ENCODE measurements at regions of chr17 and their contacts with region 1.

Region 1: DNA sequence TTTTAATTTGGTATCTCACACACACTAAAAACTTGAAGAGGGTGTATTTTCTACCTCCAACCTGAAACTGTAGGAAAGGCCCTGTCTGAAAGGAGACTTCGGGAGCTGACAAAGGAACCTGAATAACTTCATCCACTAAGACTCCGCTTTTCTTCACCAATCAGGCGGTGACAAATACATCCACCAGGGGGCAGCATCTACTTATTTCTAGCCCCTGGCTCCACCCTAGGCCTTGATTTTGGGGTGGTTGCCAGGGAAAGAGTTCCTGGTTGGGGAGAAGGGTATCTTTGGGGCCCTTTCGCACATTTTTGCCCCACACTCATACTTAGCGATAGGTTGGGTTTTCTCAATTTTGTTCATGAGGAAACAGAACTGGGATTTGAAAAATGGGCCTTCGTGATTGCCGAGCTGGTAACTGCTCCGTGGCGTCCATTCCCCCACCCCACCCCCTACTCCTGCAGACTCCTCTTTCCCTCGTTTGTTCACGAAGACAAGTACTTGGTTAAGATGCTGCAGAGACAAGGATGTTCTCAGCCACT is 4.8 kb upstream of the ARL4D start:
- DNase-seq: peak; percentile 79

Region 2: DNA sequence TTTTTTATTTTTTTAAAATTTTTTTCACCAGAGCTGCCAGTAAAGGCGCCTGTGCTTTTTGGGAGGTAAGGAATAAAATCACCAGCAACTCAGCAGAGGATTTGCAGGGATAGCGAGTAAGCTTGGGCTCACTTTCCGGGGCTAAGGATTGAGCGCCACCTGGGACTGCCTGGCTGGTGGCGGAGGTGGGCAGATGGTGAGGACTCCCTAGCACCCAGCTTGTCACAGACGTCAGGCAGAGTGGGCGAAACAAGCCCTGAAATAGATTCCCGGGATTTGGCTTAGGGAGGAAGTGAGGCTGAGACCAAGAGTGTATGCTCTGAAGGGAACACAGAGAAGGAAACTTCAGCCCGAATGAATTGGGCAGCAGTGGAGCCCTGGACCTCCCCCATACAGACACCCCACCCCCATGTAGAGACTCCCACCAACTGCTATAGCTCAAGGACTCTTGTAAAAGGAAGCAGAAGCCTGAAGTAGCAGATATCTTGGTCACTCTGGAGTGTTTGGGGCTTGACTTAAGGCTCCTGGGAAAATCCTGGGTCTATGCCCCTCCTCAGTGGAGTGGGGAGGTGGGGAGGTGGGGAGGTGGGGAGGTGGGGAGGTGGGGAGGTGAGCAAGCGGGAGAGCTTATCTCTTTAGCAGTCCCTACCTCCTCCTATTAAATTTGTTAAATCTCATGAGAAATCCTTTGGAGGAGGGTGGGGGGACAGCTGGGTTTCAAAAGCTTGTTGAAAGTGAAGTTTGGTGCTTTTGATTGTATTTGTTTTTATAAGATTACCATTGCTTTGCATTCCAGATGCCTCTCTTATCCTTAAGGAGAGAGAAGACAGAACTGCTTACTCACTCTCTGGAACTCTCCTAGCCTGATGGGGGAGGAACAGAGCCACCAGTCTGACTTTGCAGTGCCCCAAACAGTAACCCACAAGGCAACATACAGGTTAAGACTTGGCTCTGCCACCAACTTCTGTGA is 12.9 kb after region 1 on chr17:
- CTCF ChIA-PET with region 1: interaction called, 7 read pairs
- POLR2A ChIA-PET with region 1: interaction called, 59 read pairs
- DNase-seq: no peak

Region 3: DNA sequence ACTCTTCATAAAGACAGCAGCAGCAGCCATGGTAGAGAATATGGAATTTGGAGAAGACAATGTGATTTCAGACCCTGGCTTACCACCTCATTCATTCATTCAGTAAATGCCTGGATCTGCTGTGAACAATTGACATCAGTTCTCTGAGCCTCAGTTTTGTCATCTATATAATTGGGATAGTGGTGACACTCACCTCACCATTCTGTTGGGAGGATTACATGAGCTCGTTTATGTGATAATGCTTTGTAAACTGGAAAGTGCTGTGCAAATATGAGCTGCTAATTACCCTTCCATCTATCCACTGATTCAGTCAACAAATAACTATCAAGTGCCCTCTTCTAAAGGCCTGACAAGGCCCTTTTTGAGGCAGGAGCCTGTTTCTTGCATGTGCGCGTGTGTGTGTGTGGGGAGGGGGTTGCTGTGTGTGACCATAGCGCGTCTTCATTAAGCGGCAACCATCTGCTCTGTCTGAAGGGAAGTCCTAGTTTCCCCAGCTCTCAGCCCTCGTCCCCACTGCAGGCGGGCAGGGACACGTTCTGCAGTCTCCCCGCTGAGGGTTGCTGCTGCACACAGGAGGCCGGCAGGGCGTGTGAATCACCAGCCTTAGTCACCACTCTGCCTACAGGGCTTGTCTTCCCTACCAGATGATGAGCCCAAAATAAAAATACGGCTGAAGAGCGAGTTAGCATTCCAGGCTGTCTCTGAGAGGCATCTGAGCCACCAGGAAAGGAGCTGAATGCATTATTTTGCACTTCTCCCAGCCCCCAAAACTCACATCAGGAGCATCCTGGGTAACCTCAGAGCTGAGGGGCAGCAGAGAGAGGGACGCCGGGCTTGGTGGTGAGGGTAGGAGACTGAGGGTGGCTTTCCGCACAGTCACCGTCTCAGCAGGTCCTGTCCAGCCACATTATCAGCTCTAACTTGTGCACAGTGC is 24.7 kb after region 1 on chr17:
- CTCF ChIA-PET with region 1: no interaction called
- POLR2A ChIA-PET with region 1: interaction called, 59 read pairs
- DNase-seq: peak; percentile 39

Region 4: DNA sequence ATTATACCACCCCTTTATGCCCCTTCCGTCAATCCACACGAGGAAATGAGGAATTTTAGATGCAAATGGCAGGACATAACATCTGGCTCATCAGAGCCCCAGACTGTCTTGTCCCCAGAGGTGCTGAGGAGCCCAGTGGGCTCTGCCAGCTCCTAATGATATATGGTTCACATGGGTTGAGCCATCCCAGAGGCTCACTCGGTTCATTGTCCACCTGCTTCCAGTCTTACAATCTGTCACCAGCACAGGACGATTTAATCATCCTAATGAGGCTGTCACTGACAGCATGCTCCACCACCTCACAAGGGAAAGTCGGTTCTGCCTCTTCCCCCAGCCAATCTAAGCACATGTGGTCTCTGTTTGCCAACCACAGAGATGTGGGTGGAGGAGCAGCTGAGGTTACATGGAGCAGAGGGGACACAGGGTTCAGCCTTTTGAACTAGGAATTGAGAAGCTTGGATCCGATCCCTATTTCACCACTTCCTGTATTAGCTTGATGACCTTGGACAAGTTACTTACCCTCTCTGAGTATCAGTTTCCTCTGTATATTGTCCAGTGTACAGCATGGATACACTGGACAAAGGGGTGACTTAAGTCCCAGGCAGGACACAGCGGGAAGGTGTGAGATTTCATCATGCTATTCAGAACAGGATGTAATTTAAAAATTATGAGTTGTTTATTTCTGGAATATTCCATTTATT is 62.8 kb after region 1 on chr17:
- CTCF ChIA-PET with region 1: no interaction called
- POLR2A ChIA-PET with region 1: interaction called, 18 read pairs
- DNase-seq: no peak

Region 5: GRCh38 chr17:43467981-43468581 is 74.1 kb after region 1 on chr17:
- CTCF ChIA-PET with region 1: interaction called, 12 read pairs
- POLR2A ChIA-PET with region 1: interaction called, 9 read pairs
- DNase-seq: no peak

Region 6: GRCh38 chr17:43477832-43478634 is 84.0 kb after region 1 on chr17:
- CTCF ChIA-PET with region 1: interaction called, 103 read pairs
- POLR2A ChIA-PET with region 1: interaction called, 75 read pairs
- DNase-seq: no peak

Region 7: GRCh38 chr17:43483674-43484372 is 89.8 kb after region 1 on chr17 and contains the start of gene DHX8:
- CTCF ChIA-PET with region 1: interaction called, 103 read pairs
- POLR2A ChIA-PET with region 1: interaction called, 75 read pairs
- DNase-seq: peak; percentile 91

Region 8: DNA sequence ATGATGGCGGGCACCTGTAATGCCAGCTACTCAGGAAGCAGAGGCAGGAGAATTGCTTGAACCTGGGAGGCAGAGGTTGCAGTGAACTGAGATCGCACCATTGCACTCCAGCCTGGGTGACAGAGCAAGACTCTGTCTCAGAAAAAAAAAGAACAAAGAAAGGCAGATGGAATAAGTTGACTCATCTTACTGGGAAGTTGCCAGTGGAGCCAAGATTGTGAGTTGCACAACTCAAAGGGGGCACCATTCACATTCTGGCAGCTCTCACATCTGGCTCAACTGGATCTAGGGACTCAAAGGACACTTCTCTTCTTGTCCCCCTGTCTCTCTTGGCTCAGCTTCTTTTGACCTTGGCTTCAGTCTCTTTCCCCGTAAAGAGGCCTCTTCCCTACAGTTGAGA is 205.8 kb after region 1 on chr17:
- CTCF ChIA-PET with region 1: no interaction called
- POLR2A ChIA-PET with region 1: no interaction called
- DNase-seq: no peak